ENCODE measurements at regions of chr1 and their contacts with region 1.

Region 1: GRCh38 chr1:167533851-167534300 is 15.5 kb upstream of the CD247 start:
- DNase-seq: peak; percentile 67 to 81
- ATAC-seq: peak; percentile 90
- H3K4me3 ChIP-seq: no peak overlapping the region
- H3K27ac ChIP-seq: no peak overlapping the region
- H3K4me1 ChIP-seq: no peaks in the 10 kb centered on the region
- H3K27me3 ChIP-seq: no peaks in the 10 kb centered on the region

Region 2: GRCh38 chr1:167263819-167264464 is 269.9 kb before region 1 on chr1:
- intact Hi-C with region 1: loop called (anchors 10 kb)
- DNase-seq: no peak
- ATAC-seq: no peak
- H3K4me3 ChIP-seq: no peak overlapping the region
- H3K27ac ChIP-seq: no peak overlapping the region
- H3K4me1 ChIP-seq: peaks cover 3 to 5% of the 10 kb centered on the region in 2 donors
- H3K27me3 ChIP-seq: no peaks in the 10 kb centered on the region

Region 3: GRCh38 chr1:167401260-167401873 is 132.5 kb before region 1 on chr1:
- intact Hi-C with region 1: loop called in 1 of 2 experiments (anchors 5 kb)
- DNase-seq: peak in 1 of 2 donors; percentile 51
- ATAC-seq: peak; percentile 68
- H3K4me3 ChIP-seq: no peak overlapping the region
- H3K27ac ChIP-seq: no peak overlapping the region
- H3K4me1 ChIP-seq: no peaks in the 10 kb centered on the region
- H3K27me3 ChIP-seq: no peaks in the 10 kb centered on the region

Region 4: DNA sequence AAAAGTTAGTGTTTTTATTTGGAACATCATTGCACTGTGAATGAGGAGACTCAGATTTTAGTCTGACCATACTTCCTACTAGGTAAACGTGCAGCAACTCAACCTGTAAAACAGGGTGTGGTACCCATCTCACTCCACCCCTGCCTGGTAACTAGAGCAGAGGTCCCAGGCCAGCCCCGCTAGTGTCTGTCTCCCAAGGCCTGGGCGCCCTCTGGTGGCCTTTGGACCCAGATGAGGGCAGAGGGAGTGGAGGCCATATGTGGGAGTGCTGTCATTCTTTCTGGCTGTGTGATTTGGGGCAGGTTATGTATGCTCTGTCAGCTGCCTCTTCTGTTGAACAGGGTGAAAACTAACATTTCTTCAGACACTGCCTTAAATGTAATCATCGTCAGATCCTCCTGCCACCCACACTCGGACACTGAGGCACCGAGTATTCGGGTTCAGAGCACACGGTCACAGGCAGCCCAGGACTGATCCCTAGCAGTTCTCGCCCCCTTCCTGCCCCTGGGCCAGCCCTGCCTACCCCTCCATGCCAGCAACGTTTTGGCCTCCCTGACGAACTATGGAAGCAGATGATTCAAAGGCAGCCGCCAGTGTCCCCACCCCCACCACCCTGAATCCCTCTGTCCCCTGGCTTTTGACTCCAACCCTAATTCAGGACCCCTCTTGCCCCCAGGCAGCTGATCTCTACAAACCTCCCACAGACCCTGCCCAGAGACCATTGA is 91.6 kb before region 1 on chr1:
- intact Hi-C with region 1: loop called in 1 of 2 experiments (anchors 5 kb)
- DNase-seq: peak; percentile 89 to 94
- ATAC-seq: peak; percentile 84
- H3K4me3 ChIP-seq: no peak overlapping the region
- H3K27ac ChIP-seq: no peak overlapping the region
- H3K4me1 ChIP-seq: no peaks in the 10 kb centered on the region
- H3K27me3 ChIP-seq: no peaks in the 10 kb centered on the region

Region 5: DNA sequence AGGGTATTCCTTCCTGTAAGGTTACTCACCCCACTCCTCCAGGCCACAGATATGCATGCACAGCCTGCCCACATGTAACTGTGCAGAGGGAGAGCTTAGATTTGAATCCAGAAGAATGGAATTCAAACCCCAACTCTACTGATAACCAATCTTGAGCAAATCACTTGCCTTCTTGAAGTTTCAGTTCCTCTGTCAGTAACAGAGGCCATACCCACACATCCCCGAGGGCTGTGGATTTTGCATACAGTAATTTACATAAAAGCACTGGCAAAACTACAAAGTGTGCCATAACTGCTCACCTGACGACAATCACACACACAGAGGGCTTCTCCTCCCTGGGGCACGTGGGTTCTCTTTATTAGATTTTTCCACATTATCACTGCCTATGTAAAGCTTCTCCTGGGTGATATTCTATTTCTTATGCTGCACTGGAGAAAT is 34.2 kb before region 1 on chr1:
- intact Hi-C with region 1: no loop called
- DNase-seq: no peak
- ATAC-seq: no peak
- H3K4me3 ChIP-seq: no peak overlapping the region
- H3K27ac ChIP-seq: no peak overlapping the region
- H3K4me1 ChIP-seq: no peaks in the 10 kb centered on the region
- H3K27me3 ChIP-seq: no peaks in the 10 kb centered on the region